ENCODE measurements at regions of chr9 and their contacts with region 1.

Region 1: DNA sequence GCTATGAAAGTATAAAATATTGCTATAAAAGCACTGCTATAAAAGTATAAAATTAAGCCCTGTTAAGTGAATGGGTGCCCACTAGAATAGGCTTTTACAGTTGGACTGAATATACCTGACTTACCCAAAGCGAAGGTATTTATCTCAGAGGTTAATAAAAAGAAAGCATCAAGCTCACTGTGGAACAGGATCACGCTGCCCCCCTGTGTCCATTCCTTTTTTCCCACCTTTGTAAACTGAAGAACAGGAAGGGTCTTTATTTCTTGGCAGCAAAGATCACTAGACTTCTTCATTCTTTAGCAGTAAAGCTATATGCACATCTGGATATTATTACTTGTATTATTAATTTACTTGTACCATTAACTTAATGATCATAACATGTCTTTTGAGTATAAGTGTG is 22.1 kb upstream of the PLPP6 start:
- DNase-seq: peak; percentile 64
- ATAC-seq: no peak
- H3K4me3 Mint-ChIP-seq: no peak overlapping the region
- H3K27ac Mint-ChIP-seq: no peak overlapping the region
- H3K4me1 Mint-ChIP-seq: peaks cover 5% of the 10 kb centered on the region
- H3K27me3 Mint-ChIP-seq: no peaks in the 10 kb centered on the region

Region 2: DNA sequence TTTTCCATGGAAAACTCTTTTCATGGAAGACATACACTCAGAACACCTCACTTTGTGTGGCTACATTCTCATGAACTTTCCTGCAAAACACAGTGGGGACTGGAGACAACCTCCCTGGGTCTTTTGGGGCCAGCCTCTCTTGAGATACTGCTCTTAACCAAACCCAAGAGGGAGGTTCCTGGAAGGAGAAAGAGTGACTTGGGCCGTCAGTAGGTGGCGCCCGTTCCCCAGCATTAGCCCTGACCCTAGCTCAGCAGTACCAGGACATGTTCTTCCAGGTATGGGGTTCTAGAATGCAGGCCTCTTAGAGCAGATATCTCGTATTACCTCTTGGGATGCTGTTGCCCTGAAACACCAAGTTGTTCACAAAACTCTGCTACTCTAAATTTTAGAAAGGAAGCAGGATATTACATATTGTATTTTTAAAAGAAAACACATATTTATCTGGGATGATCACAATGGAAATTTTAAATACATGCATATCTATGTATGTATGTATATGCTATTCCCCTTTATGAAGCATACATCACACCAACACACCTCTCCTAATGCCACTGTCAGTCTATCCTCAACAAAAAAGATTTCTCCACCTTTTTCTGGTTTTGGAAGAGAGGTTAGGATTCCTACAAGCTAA is 324.3 kb before region 1 on chr9:
- CTCF ChIA-PET with region 1: interaction called, 9 read pairs
- POLR2A ChIA-PET with region 1: no interaction called
- intact Hi-C with region 1: loop called (anchors 1 to 5 kb)
- DNase-seq: peak; percentile 88
- ATAC-seq: peak; percentile 97
- H3K4me3 Mint-ChIP-seq: no peak overlapping the region
- H3K27ac Mint-ChIP-seq: no peak overlapping the region
- H3K4me1 Mint-ChIP-seq: no peaks in the 10 kb centered on the region
- H3K27me3 Mint-ChIP-seq: peaks cover 4% of the 10 kb centered on the region